ENCODE measurements at regions of chr11 and their contacts with region 1.

Region 1: DNA sequence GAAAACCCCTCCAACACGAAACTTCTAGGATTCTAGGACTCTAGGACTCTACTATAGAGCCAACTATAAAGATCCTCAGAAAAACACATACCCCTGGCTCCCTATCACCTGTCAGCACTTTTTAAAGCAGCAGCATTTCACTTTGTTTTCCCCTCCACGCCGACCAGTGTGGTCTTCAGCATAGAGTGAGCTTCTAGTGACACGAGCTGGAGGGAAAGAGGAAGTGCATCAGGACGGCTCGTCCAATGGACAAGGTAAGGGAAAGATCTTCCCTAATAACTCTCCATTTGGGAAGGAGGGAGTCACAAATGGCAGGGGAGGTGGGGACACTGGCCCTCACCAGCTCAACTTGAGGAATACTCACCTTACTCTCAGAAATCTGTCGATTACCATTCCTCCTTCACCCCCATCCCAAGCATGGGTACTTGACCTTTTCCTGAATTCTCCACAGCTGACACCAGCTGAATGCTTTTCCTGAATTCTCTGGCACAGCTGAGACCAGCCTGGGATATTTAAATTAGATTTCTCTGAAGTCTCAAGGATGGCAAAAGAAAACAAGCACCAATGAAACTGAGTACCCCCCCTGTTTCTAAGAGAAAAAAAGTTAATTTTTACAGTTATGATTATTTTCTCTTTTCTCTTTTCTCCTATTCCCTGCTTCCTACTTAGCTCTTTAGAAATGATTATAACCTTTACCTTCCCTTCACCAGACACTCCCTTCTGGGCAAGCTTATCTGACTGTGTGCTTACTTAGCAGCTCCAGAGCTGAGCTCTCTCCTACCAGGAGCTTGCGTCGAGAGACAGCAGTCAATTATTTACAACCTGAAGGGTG is 33.3 kb upstream of the NNMT start:
- DNase-seq: peak in 2 of 5 donors; percentile 33 to 41
- ATAC-seq: peak in 3 of 4 donors; percentile 42 to 51 (median 47)
- H3K4me3 ChIP-seq: no peak overlapping the region
- H3K27ac ChIP-seq: no peak overlapping the region
- H3K4me1 ChIP-seq: peaks cover 0 to 47% (median 32%) of the 10 kb centered on the region in 12 donors
- H3K27me3 ChIP-seq: no peaks in the 10 kb centered on the region
- CTCF ChIP-seq: peak; percentile 42 to 89 (median 73)
- POLR2A ChIP-seq: no peak

Region 2: GRCh38 chr11:113806406-113806805 is 456.5 kb before region 1 on chr11:
- intact Hi-C with region 1: loop called in 1 of 10 experiments (anchors 10 kb)
- DNase-seq: no peak
- ATAC-seq: peak in 3 of 4 donors; percentile 59 to 75 (median 68)
- H3K4me3 ChIP-seq: no peak overlapping the region
- H3K27ac ChIP-seq: no peak overlapping the region
- H3K4me1 ChIP-seq: no peaks in the 10 kb centered on the region
- H3K27me3 ChIP-seq: no peaks in the 10 kb centered on the region
- CTCF ChIP-seq: peak in 10 of 12 donors; percentile 18 to 45 (median 31)
- POLR2A ChIP-seq: no peak

Region 3: DNA sequence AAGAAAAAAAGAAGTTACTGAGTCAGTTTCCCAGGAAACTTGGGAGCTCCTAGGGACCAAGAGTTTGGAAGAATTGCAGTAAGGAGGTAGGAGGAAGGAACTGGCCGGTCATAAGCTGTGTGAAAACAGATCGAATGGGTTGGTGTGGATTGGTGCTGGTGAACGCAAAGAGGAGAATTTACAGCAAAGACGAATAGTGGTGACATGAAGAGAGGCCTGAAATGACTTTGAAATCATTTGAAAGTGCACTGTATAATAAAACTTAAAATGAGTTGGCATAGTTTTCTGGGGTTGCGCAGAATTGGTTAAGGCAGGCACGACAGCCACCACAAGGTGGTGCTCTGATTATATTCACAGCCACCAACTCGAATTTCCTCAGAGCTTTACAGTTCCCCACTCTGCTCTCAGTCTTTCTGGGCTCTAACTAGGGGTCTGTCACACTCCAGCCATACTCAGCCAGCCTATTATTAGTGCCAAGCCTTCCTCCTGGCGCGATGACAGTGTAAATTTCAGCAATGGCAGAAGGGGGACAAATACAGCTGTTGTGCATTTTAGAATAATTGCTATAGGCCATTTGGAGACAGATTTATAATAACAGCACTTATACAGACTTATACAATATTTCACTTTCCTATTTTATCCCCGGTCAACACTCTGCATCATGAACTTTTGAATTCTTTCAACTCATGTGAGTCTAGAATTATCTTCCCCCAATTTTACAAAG is 366.6 kb before region 1 on chr11:
- intact Hi-C with region 1: loop called (anchors 1 to 5 kb)
- DNase-seq: peak in 2 of 5 donors; percentile 23 to 39
- ATAC-seq: peak; percentile 63 to 74 (median 70)
- H3K4me3 ChIP-seq: no peak overlapping the region
- H3K27ac ChIP-seq: no peak overlapping the region
- H3K4me1 ChIP-seq: peaks cover 0 to 15% (median 0%) of the 10 kb centered on the region in 12 donors
- H3K27me3 ChIP-seq: no peaks in the 10 kb centered on the region
- CTCF ChIP-seq: peak; percentile 55 to 81 (median 71)
- POLR2A ChIP-seq: no peak

Region 4: DNA sequence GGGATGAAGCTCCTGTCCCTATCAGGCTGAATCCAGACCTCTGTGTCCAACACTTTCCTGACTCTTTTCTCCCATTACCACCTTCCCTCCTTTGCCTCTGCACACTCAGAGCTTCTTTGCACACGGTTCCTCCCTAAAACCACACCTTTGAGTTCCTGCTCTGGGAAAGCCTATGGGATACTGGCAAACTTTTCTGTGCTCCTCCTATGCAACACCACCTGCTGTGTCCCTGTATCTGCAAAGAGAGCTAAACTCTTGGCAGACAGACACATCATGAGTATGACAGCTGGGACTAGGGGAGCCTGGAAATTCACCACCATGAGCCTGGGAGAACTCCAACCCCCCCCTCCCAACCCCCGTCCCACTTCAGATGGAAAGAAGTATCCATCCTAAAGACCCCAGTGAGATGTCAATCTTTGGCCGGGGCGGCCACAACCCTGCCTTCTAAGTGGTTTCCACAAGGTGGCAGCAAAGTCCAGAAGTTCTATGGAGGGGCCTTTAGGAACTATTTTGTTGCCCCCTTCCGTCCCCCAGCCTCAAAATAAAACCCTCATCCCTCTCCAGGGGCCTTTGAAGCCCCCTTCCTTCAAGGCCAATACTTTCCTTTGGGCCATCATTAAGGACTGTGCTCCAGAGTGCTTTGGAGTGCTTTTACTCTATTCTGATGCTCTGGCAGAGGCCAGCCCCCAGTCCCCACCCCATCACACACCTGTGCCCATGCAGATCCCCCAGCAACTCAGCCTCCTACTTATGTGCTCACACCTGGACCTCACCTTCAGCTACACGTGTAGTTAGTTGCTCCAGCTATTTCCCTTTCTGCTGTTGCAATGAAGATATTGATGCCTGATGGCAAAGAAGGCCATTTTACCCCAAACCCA is 268.6 kb before region 1 on chr11:
- intact Hi-C with region 1: loop called (anchors 1 to 5 kb)
- DNase-seq: no peak
- ATAC-seq: peak in 1 of 4 donors; percentile 56
- H3K4me3 ChIP-seq: no peak overlapping the region
- H3K27ac ChIP-seq: no peak overlapping the region
- H3K4me1 ChIP-seq: no peaks in the 10 kb centered on the region
- H3K27me3 ChIP-seq: peaks cover 0 to 39% (median 8%) of the 10 kb centered on the region in 9 donors
- CTCF ChIP-seq: peak; percentile 52 to 74 (median 68)
- POLR2A ChIP-seq: no peak

Region 5: DNA sequence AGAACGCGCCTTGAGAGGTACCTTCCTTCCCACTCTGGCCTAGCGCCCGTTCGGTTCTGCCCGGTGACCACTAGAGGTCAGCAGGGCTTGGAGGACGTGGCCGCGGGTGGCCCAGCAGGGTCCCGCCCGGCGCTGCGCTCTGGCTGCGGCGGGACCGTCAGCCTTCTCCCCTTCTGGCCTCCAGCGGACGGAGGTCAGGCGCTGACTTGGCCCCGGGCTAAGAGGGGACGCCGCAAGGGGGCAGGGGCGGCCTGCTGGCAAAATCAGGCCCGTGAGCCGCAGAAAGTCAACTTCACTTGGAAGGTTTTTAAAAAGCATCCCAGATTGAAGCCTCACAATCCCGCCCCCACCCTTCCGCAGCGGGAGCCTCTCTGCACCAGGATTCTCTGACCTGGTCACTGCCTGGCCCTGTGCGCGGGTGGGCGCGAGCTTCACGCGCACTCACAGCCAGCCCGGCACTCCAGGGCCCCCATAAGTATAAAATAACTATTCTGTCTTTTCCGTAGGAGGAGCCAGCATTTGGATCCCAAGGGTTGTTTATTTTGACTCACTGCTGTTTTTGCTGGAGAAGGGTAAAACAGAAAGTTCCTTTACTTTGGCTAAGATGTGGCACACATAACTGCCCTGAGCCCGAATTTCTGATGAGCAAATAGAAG is 226.6 kb before region 1 on chr11:
- intact Hi-C with region 1: loop called (anchors 1 to 5 kb)
- DNase-seq: peak; percentile 83 to 93 (median 91)
- ATAC-seq: peak; percentile 84 to 96 (median 94)
- H3K4me3 ChIP-seq: peak overlapping the region in 10 of 12 donors; percentile 26 to 60 (median 48)
- H3K27ac ChIP-seq: peak overlapping the region in 10 of 12 donors; percentile 50 to 88 (median 75)
- H3K4me1 ChIP-seq: peaks cover 4 to 30% (median 11%) of the 10 kb centered on the region in 12 donors
- H3K27me3 ChIP-seq: no peaks in the 10 kb centered on the region
- CTCF ChIP-seq: peak; percentile 85 to 96 (median 94)
- POLR2A ChIP-seq: peak in 1 of 2 donors; percentile 39

Region 6: DNA sequence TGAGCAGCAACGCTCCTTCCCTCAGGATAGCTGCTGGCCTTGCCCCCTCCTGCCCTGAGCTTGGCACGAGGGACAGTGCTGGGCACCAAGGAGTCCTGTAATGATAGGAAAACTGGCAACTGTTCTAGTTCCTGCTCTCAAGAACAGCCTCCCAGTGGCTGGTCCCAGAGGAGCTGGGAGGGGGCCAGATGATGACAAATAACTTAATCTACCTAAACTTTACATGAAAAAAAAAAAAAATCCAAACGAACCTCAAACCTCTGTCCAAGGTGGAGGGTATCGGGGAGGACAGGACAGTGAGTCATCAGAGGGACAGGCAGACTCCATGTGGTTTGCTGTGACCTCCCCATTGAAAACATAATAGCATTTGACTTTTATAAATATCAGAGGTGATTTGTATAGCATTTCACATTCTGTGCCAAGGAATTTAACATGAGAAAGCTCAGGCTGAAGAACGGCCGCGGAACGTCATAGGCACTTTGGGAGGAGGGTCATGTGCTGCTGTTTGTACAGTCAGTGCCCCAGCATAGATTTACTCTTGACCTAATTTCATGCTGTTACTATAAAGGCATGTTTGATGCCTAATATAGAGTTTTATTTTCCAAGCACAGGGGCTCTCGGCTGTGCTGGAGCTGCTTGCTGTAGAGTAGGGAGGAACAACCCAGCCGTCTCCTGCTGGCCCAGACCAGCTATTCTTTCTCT is 64.9 kb before region 1 on chr11:
- intact Hi-C with region 1: loop called in 6 of 10 experiments (anchors 5 to 10 kb)
- DNase-seq: peak; percentile 78 to 92 (median 81)
- ATAC-seq: peak; percentile 77 to 91 (median 84)
- H3K4me3 ChIP-seq: peak overlapping the region in 1 of 12 donors; percentile 3
- H3K27ac ChIP-seq: peak overlapping the region; percentile 76 to 97 (median 90)
- H3K4me1 ChIP-seq: peaks cover 27 to 99% (median 85%) of the 10 kb centered on the region in 12 donors
- H3K27me3 ChIP-seq: no peaks in the 10 kb centered on the region
- CTCF ChIP-seq: peak in 1 of 12 donors; percentile 18
- POLR2A ChIP-seq: peak in 1 of 2 donors; percentile 72